A673 (cell line): ENCODE measurements at regions of chr10 and their contacts with region 1.

Region 1: DNA sequence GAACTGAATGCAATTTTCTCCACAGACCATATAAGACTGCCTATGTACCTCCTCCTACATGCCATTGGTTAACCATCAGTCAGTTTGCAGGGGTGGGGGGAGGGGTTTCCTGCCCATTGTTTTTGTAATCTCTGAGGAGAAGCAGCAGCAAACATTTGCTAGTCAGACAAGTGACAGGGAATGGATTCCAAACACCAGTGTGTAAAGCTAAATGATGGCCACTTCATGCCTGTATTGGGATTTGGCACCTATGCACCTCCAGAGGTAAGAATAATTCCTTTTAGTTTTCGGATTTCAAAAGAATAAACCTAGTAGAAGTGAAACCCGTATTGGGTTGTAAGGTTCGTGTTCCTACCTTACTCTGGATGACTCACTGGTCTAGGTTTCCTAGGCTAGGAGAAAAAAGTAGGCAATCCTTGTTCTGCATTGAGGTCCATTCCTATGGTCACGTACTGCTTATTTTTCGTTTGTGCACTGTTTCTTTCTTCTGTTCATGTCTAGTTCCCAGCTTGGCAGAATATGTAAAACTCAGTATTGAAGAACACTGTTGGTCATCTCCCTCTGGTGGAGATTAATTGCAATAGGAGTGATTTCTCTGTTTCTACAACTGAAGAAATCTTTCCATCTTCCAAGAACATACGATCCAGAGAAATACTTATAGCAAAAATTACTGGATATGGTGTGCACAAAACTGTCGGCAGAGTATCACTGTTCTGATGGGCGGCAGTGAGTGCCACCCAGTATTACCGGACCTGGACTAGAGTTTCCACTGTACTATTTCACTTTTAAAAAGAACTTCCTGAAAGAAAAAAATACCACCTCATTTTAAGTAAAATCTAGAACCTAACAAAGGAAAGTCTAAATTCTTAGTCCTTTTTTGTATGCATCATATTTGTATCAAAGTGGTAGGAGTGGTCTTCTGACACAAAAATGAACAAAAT is at the start of gene AKR1C3:
- DNase-seq: peak; percentile 89
- H3K4me3 ChIP-seq: peak within 1 kb of the TSS; percentile 63
- H3K27ac ChIP-seq: peak within 1 kb of the TSS; percentile 83
- H3K4me1 ChIP-seq: peaks cover 4% of the 10 kb centered on the region
- H3K27me3 ChIP-seq: no peaks in the 10 kb centered on the region
- CTCF ChIP-seq: peak; percentile 80
- total RNA-seq, gene AKR1C3: 618 and 627 TPM in 2 replicates

Region 2: GRCh38 chr10:5014936-5015335 is 79.6 kb before region 1 on chr10:
- CTCF ChIA-PET with region 1: no interaction called
- POLR2A ChIA-PET with region 1: no interaction called
- intact Hi-C with region 1: loop called (anchors 5 kb)
- DNase-seq: peak; percentile 51
- H3K4me3 ChIP-seq: no peak overlapping the region
- H3K27ac ChIP-seq: no peak overlapping the region
- H3K4me1 ChIP-seq: peaks cover 32% of the 10 kb centered on the region
- H3K27me3 ChIP-seq: no peaks in the 10 kb centered on the region
- CTCF ChIP-seq: peak; percentile 50

Region 3: DNA sequence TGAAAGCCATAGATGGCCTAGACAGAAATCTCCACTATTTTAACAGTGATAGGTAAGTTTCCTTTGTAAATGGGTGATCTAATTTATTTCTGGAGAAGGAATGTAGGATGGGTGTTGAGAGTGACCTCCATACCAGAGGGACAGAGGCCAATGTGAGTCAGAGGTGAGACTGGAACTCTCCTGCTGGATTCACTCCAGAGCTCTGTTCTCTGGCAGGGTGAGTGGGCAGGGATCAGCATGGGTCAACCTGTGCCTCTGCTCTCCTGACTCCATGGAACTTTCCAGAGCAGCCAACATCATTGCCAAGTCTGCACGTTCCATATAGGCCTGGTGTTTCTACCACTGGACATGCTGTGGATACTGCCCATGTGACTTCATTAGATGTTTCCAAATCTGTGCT is 11.1 kb after region 1 on chr10:
- CTCF ChIA-PET with region 1: no interaction called
- POLR2A ChIA-PET with region 1: no interaction called
- intact Hi-C with region 1: no loop called
- DNase-seq: no peak
- H3K4me3 ChIP-seq: no peak overlapping the region
- H3K27ac ChIP-seq: no peak overlapping the region
- H3K4me1 ChIP-seq: no peaks in the 10 kb centered on the region
- H3K27me3 ChIP-seq: no peaks in the 10 kb centered on the region
- CTCF ChIP-seq: no peak

Region 4: DNA sequence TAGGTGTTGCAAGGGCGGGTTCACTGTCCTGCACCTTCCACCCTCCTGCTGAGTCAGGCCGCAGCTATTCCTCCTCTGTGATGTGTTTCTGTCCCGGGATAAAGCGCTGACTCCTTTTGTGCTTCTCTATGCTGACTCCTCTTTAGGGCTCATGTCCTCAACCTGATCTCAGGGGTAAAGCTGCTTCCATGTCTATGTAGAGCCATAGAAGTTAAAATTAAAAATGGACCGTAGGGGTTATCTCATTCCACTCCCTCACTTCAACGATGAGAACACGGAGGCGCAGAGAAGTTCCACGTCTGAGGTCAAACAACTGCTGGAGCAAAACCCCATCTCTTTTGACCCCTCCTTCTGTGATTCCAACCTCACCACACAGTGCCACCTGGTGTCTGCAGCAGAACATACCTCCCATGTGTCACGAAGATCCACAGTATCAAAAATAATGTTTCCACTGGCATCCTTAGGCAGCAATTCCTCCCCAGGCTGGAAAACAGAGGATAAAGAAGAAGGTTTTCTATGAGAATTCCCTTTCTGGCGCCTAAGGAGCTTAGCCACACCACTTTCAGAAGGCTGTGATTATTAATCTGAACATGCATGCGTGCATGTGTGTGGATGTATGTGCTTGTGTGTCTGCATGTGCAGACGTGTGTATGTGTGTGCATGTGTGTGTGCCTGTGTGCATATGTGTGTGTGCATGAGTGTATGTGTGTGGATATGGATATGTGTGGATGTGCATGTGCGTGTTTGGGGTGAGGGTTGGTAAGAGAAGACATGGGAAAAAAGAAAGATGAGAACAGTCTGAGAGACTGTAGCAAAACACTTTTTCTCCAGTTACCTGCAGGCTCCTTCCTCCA is 189.0 kb after region 1 on chr10:
- CTCF ChIA-PET with region 1: no interaction called
- POLR2A ChIA-PET with region 1: no interaction called
- intact Hi-C with region 1: loop called (anchors 2 kb)
- DNase-seq: peak; percentile 89
- H3K4me3 ChIP-seq: no peak overlapping the region
- H3K27ac ChIP-seq: peak overlapping the region; percentile 73
- H3K4me1 ChIP-seq: peaks cover 23% of the 10 kb centered on the region
- H3K27me3 ChIP-seq: no peaks in the 10 kb centered on the region
- CTCF ChIP-seq: peak; percentile 83

Region 5: GRCh38 chr10:5385224-5385623 is 290.7 kb after region 1 on chr10:
- CTCF ChIA-PET with region 1: no interaction called
- POLR2A ChIA-PET with region 1: no interaction called
- intact Hi-C with region 1: loop called (anchors 10 kb)
- DNase-seq: no peak
- H3K4me3 ChIP-seq: no peak overlapping the region
- H3K27ac ChIP-seq: no peak overlapping the region
- H3K4me1 ChIP-seq: no peaks in the 10 kb centered on the region
- H3K27me3 ChIP-seq: no peaks in the 10 kb centered on the region
- CTCF ChIP-seq: no peak